ENCODE measurements at regions of chr6 and their contacts with region 1.

Region 1: GRCh38 chr6:37169496-37170272 is at the start of gene PIM1:
- DNase-seq: peak; percentile 100
- ATAC-seq: peak; percentile 76
- H3K4me3 Mint-ChIP-seq: peak within 1 kb of the TSS; percentile 91
- H3K27ac Mint-ChIP-seq: peak within 1 kb of the TSS; percentile 96
- H3K4me1 Mint-ChIP-seq: peaks cover 39% of the 10 kb centered on the region
- H3K27me3 Mint-ChIP-seq: no peaks in the 10 kb centered on the region
- total RNA-seq, gene PIM1: 137 to 163 TPM

Region 2: GRCh38 chr6:36885461-36886401 is 284.0 kb before region 1 on chr6 and contains the start of gene C6orf89:
- CTCF ChIA-PET with region 1: interaction called, 5 read pairs
- POLR2A ChIA-PET with region 1: no interaction called
- intact Hi-C with region 1: loop called (anchors 2 to 5 kb)
- DNase-seq: peak; percentile 99
- ATAC-seq: peak; percentile 100
- H3K4me3 Mint-ChIP-seq: peak within 1 kb of the TSS; percentile 89
- H3K27ac Mint-ChIP-seq: peak within 1 kb of the TSS; percentile 97
- H3K4me1 Mint-ChIP-seq: peaks cover 31% of the 10 kb centered on the region
- H3K27me3 Mint-ChIP-seq: no peaks in the 10 kb centered on the region
- total RNA-seq, gene C6orf89: 29.5 to 36.2 TPM

Region 3: DNA sequence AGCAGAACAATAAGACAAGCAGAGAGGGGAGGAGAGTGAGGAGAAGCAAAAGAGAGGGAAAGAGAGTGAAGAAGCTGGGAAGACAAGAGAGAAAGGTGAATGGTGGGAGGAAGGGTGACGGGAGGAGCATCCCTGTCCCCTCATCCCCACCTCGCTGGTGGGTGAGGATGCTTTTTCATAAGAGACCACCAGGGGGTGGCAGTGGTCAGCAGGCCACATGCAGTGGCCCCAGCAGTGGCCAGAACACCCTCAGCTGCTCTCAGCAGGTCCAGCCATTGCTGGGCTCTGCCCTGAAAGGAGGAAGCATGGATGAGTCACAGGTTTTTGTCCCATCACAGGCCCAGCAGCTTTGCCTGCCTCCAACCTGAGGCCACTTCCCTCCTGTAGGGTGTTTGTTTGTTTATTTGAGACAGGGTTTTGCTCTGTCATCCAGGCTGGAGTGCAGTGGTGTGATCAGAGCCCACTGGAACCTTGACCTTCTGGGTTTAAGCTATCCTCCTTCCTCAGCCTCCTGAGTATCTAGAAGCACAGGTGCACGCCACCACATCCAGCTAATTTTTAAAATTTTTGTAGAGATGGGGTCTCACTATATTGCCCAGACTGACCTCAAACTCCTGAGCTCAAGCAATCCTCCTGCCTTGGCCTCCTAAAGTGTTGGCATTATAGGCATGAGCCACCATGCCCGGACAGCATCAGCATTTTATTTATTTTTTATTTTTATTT is 140.3 kb before region 1 on chr6:
- CTCF ChIA-PET with region 1: interaction called, 271 read pairs
- POLR2A ChIA-PET with region 1: interaction called, 6 read pairs
- intact Hi-C with region 1: loop called in 1 of 2 experiments (anchors 1 kb)
- DNase-seq: peak; percentile 68
- ATAC-seq: peak; percentile 17
- H3K4me3 Mint-ChIP-seq: no peak overlapping the region
- H3K27ac Mint-ChIP-seq: peak overlapping the region; percentile 60
- H3K4me1 Mint-ChIP-seq: peaks cover 54% of the 10 kb centered on the region
- H3K27me3 Mint-ChIP-seq: no peaks in the 10 kb centered on the region

Region 4: GRCh38 chr6:37137201-37138090 is 32.2 kb before region 1 on chr6:
- CTCF ChIA-PET with region 1: interaction called, 5 read pairs
- POLR2A ChIA-PET with region 1: interaction called, 6 read pairs
- intact Hi-C with region 1: loop called (anchors 1 to 2 kb)
- DNase-seq: peak; percentile 71
- ATAC-seq: peak; percentile 82
- H3K4me3 Mint-ChIP-seq: peak overlapping the region; percentile 43
- H3K27ac Mint-ChIP-seq: peak overlapping the region; percentile 94
- H3K4me1 Mint-ChIP-seq: peaks cover 46% of the 10 kb centered on the region
- H3K27me3 Mint-ChIP-seq: no peaks in the 10 kb centered on the region

Region 5: DNA sequence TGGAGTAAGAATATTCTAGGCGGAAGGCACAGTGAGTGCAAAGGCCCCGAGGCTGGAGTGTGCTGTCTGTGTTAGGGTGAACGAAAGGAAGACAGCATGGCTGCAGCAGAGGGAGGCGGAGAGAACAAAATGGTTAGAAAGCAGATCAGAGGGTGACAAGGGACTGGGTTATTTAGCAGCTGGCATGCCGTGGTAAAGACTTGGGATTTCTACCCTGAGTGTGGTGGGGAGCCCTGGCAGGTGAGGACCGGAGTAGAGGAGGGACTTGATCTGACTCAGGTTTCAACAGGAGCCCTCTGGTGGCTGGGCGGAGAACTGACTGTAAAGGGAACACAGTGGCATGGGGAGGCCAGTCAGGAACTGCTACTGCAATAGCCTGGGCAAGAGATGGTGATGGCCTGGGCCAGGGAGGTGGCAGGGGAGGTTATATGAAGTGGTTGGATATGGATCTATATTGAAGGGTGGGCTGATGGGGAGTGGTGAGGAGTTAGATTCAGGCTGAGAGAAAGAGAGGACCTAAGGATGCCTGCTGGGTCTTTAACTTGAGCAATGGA is 38.3 kb after region 1 on chr6:
- CTCF ChIA-PET with region 1: interaction called, 240 read pairs
- POLR2A ChIA-PET with region 1: interaction called, 34 read pairs
- intact Hi-C with region 1: loop called (anchors 1 kb)
- DNase-seq: peak; percentile 95
- ATAC-seq: peak; percentile 73
- H3K4me3 Mint-ChIP-seq: no peak overlapping the region
- H3K27ac Mint-ChIP-seq: peak overlapping the region; percentile 53
- H3K4me1 Mint-ChIP-seq: peaks cover 67% of the 10 kb centered on the region
- H3K27me3 Mint-ChIP-seq: no peaks in the 10 kb centered on the region

Region 6: GRCh38 chr6:37499433-37500293 is 330.0 kb after region 1 on chr6 and contains the start of gene CCDC167:
- CTCF ChIA-PET with region 1: no interaction called
- POLR2A ChIA-PET with region 1: no interaction called
- intact Hi-C with region 1: loop called in 1 of 2 experiments (anchors 2 kb)
- DNase-seq: peak; percentile 99
- ATAC-seq: peak; percentile 82
- H3K4me3 Mint-ChIP-seq: peak within 1 kb of the TSS; percentile 88
- H3K27ac Mint-ChIP-seq: peak within 1 kb of the TSS; percentile 96
- H3K4me1 Mint-ChIP-seq: peaks cover 89% of the 10 kb centered on the region
- H3K27me3 Mint-ChIP-seq: no peaks in the 10 kb centered on the region
- total RNA-seq, gene CCDC167: 55.3 to 60.3 TPM